K562 (cell line): ENCODE measurements at regions of chr5 and their contacts with region 1.

Region 1: GRCh38 chr5:69265931-69266330 is 31.2 kb downstream of the CDK7 start:
- DNase-seq: peak in 2 of 4 experiments; percentile 17 to 59
- ATAC-seq: peak; percentile 99
- H3K4me3 ChIP-seq: no peak overlapping the region
- H3K27ac ChIP-seq: no peak overlapping the region
- H3K4me1 ChIP-seq: no peaks in the 10 kb centered on the region
- H3K27me3 ChIP-seq: no peaks in the 10 kb centered on the region
- CTCF ChIP-seq: peak; percentile 61 to 74 (median 71)
- EP300 ChIP-seq: no peak
- POLR2A ChIP-seq: no peak
- RAD21 ChIP-seq: peak in 1 of 2 experiments; percentile 53; a peak in 2 of 4 replicates

Region 2: DNA sequence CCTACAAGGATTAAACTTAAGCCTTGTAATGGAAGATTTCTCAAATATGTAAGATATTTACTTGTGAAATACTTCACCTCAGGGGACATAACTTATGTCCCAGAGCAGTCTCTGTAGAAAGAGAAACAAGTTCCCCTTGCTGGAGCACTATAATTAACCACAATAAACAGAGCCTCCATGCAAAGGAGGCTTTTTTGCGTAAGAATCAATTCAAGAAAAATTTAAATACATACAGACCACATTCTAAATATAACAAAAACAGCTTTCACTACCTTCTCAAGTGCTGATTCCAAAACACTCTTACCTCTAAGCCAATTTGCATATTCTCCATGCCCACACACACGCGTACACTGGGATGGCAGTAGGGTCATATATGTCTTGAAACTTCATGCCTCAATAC is 129.6 kb before region 1 on chr5:
- CTCF ChIA-PET with region 1: no interaction called
- POLR2A ChIA-PET with region 1: no interaction called
- in situ Hi-C with region 1: no loop called
- intact Hi-C with region 1: no loop called
- DNase-seq: no peak
- ATAC-seq: no peak
- H3K4me3 ChIP-seq: no peak overlapping the region
- H3K27ac ChIP-seq: no peak overlapping the region
- H3K4me1 ChIP-seq: no peaks in the 10 kb centered on the region
- H3K27me3 ChIP-seq: no peaks in the 10 kb centered on the region
- CTCF ChIP-seq: no peak
- EP300 ChIP-seq: no peak
- POLR2A ChIP-seq: no peak
- RAD21 ChIP-seq: no peak

Region 3: DNA sequence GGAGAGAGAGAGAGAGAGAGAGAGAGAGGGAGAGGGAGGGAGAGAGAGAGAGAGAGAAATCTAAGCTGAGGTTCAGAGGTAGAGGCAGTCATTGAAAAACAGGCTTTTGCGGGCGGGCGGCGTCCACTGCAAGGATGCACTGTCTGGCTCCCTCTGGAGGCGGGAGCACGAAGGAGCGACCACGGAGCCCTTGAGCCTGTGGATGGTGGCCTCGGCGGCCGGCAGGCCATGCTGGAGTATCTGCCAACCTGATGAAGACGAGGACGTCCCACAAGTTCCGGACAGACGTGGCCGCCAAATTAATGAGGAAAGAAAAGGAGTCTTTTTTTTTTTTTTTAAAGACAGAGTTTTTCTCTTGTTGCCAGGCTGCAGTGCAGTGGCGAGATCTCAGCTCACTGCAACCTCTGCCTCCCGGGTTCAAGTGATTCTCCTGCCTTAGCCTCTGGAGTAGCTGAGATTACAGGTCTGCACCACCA is 68.9 kb after region 1 on chr5:
- CTCF ChIA-PET with region 1: interaction called, 3 read pairs
- POLR2A ChIA-PET with region 1: no interaction called
- in situ Hi-C with region 1: no loop called
- intact Hi-C with region 1: loop called (anchors 2 kb)
- DNase-seq: peak; percentile 51 to 89 (median 70)
- ATAC-seq: peak; percentile 93
- H3K4me3 ChIP-seq: no peak overlapping the region
- H3K27ac ChIP-seq: no peak overlapping the region
- H3K4me1 ChIP-seq: peaks cover 7 to 33% of the 10 kb centered on the region in 2 experiments; a peak in 4 of 5 replicates
- H3K27me3 ChIP-seq: no peaks in the 10 kb centered on the region
- CTCF ChIP-seq: peak; percentile 80 to 93 (median 82)
- EP300 ChIP-seq: no peak
- POLR2A ChIP-seq: no peak
- RAD21 ChIP-seq: peak; percentile 48 to 86; a peak in 3 of 4 replicates

Region 4: DNA sequence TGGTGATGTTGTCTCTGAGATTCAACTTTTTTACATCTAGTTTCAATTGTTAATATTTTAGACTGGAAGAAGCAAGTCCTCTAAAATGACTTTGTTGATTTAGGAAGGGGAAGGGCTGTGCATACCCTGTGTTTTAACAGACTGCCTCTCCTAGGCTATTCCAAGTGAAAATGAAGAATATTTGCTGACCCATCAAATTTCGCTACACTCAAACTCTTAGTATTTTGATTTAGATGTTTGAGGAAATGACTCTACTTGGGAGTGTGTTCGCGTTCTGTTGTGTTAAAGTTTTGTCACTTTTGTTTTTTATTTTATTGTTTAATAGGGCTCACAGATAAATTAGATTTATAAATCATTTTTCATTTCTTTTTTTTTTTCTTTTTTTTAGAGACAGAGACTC is 152.6 kb after region 1 on chr5:
- CTCF ChIA-PET with region 1: no interaction called
- POLR2A ChIA-PET with region 1: no interaction called
- in situ Hi-C with region 1: no loop called
- intact Hi-C with region 1: no loop called
- DNase-seq: no peak
- ATAC-seq: no peak
- H3K4me3 ChIP-seq: no peak overlapping the region
- H3K27ac ChIP-seq: no peak overlapping the region
- H3K4me1 ChIP-seq: no peaks in the 10 kb centered on the region
- H3K27me3 ChIP-seq: no peaks in the 10 kb centered on the region
- CTCF ChIP-seq: no peak
- EP300 ChIP-seq: no peak
- POLR2A ChIP-seq: no peak
- RAD21 ChIP-seq: no peak